AG04449 (cell line): ENCODE measurements at regions of chr13 and their contacts with region 1.

Region 1: DNA sequence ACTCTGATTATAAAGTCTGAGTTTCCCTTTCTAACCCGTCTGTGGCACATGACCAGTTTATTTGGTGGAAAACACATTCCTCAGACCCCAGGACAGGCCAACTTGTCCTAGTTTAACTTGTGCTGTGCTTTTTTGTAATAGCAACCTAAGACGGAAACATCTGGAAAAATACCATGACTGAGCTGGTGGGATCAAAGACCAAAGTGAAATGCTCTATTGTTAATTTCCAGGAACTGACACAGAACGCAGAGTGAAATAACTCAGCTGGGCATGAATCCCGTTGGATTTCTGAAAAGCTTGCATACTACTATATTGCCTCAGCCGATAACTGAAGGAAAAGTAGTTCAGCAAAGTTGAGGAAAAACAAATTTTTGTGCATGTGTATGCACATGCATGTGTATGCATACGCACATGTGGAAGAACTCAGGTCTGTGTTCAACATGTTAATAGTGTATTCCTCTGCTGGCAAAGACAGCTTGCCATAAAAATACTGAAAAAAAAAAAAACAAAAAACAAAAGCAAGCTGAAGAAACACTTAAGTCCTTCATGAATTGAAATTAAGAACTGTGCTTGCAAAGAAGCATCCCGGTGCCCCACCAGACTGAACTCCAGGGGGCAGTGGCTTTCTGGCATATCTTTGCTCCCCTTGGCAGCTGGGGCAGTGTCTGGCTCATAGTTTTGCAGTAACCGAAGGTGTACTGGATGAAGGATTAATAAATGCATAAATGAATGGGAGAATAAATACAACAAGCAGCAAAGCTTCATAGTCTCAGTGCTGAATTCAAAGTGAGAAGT is 187.8 kb downstream of the LHFPL6 start:
- DNase-seq: no peak
- H3K4me3 ChIP-seq: no peak overlapping the region
- CTCF ChIP-seq: peak; percentile 60

Region 2: GRCh38 chr13:39347926-39348901 is 67.0 kb before region 1 on chr13:
- CTCF ChIA-PET with region 1: no interaction called
- POLR2A ChIA-PET with region 1: no interaction called
- DNase-seq: no peak
- H3K4me3 ChIP-seq: no peak overlapping the region
- CTCF ChIP-seq: no peak

Region 3: DNA sequence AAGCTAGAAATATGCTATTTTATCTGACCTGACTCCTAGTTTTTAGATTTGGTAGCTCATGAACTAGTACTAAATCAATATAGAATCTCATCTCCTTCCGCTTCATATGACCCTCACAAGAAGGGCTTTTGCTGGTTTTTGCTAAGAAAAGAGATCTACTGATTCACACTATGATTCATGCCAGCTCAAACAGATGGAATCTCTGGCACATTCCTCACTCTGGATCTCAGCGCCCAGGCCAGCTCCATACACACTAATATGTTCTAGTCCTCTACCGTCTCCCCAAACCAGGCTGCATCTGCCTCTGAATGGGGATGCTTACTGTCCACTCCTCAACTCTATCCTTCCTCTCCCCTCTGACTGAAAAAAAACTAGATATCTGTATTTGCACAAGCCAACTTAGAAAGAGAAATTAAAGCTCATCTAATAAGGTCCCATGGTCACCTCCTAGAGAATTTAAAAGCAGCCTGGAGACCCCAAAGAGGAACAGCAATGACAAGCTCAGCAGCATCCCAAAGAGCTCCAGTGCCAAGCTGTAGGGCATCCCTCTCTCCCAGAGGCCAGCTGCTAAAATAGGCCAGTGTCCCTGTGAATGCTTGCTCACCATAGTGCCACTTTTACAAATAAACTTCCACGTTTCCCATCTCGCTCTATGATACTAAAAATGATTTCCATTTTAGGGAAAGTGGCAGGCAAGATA is 112.9 kb after region 1 on chr13:
- CTCF ChIA-PET with region 1: no interaction called
- POLR2A ChIA-PET with region 1: no interaction called
- DNase-seq: peak; percentile 78
- H3K4me3 ChIP-seq: no peak overlapping the region
- CTCF ChIP-seq: no peak

Region 4: GRCh38 chr13:39602614-39603366 is 187.6 kb after region 1 on chr13 and contains the start of gene LHFPL6:
- CTCF ChIA-PET with region 1: interaction called, 56 read pairs
- POLR2A ChIA-PET with region 1: no interaction called
- DNase-seq: no peak
- H3K4me3 ChIP-seq: peak within 1 kb of the TSS; percentile 87
- CTCF ChIP-seq: peak; percentile 60